Caco-2 (cell line): ENCODE measurements at regions of chr14 and their contacts with region 1.

Region 1: DNA sequence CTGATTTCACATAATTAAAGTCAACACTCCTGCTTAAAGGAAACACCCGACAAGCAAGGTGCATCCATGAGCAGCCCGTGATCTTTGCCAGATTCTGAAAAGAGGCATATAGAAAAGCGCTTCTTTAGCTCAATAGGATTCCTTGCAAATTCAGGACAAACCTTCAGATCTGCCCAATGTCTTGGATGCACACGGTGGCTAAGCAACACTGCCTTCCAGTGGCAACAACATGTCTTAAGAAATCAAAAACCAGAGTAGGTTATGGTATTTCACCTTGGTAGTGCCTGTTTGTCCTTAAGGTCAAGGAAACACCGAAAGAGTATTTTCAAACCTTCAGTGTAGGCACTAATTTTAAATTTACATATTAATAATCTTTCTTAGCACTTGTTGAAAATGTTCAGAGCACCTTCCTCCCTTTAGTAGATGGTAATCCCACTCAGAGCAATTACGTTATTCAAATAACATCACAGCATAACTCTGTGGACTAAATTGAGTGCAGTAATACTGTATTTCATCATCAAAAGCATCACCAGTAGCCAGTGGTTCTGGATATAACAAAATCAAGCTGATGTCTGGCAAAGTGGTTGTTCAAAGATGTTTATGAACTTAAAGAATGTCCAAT is 58.0 kb upstream of the CDKN3 start:
- DNase-seq: peak in 1 of 2 experiments; percentile 35
- H3K4me3 ChIP-seq: no peak overlapping the region
- H3K4me3 Mint-ChIP-seq: no peak overlapping the region
- H3K27ac Mint-ChIP-seq: no peak overlapping the region
- H3K4me1 ChIP-seq: no peaks in the 10 kb centered on the region
- H3K4me1 Mint-ChIP-seq: peaks cover 13% of the 10 kb centered on the region
- H3K27me3 ChIP-seq: no peaks in the 10 kb centered on the region
- H3K27me3 Mint-ChIP-seq: no peaks in the 10 kb centered on the region
- CTCF ChIP-seq: peak; percentile 27 to 70

Region 2: GRCh38 chr14:53613404-53614253 is 725.2 kb before region 1 on chr14:
- CTCF ChIA-PET with region 1: interaction called, 3 read pairs
- POLR2A ChIA-PET with region 1: no interaction called
- intact Hi-C with region 1: loop called (anchors 1 kb)
- DNase-seq: peak; percentile 89 to 91
- H3K4me3 ChIP-seq: peak overlapping the region; percentile 41
- H3K4me3 Mint-ChIP-seq: peak overlapping the region; percentile 83
- H3K27ac Mint-ChIP-seq: peak overlapping the region; percentile 98
- H3K4me1 ChIP-seq: peaks cover 56% of the 10 kb centered on the region
- H3K4me1 Mint-ChIP-seq: peaks cover 17% of the 10 kb centered on the region
- H3K27me3 ChIP-seq: no peaks in the 10 kb centered on the region
- H3K27me3 Mint-ChIP-seq: no peaks in the 10 kb centered on the region
- CTCF ChIP-seq: peak in 1 of 2 experiments; percentile 32

Region 3: GRCh38 chr14:53888535-53889386 is 450.0 kb before region 1 on chr14:
- CTCF ChIA-PET with region 1: no interaction called
- POLR2A ChIA-PET with region 1: no interaction called
- intact Hi-C with region 1: loop called (anchors 5 kb)
- DNase-seq: peak in 1 of 2 experiments; percentile 46
- H3K4me3 ChIP-seq: peak overlapping the region; percentile 13; the same call in 1 of the 2 replicates
- H3K4me3 Mint-ChIP-seq: peak overlapping the region; percentile 59
- H3K27ac Mint-ChIP-seq: peak overlapping the region; percentile 45
- H3K4me1 ChIP-seq: peaks cover 42% of the 10 kb centered on the region
- H3K4me1 Mint-ChIP-seq: peaks cover 48% of the 10 kb centered on the region
- H3K27me3 ChIP-seq: no peaks in the 10 kb centered on the region
- H3K27me3 Mint-ChIP-seq: no peaks in the 10 kb centered on the region
- CTCF ChIP-seq: no peak

Region 4: DNA sequence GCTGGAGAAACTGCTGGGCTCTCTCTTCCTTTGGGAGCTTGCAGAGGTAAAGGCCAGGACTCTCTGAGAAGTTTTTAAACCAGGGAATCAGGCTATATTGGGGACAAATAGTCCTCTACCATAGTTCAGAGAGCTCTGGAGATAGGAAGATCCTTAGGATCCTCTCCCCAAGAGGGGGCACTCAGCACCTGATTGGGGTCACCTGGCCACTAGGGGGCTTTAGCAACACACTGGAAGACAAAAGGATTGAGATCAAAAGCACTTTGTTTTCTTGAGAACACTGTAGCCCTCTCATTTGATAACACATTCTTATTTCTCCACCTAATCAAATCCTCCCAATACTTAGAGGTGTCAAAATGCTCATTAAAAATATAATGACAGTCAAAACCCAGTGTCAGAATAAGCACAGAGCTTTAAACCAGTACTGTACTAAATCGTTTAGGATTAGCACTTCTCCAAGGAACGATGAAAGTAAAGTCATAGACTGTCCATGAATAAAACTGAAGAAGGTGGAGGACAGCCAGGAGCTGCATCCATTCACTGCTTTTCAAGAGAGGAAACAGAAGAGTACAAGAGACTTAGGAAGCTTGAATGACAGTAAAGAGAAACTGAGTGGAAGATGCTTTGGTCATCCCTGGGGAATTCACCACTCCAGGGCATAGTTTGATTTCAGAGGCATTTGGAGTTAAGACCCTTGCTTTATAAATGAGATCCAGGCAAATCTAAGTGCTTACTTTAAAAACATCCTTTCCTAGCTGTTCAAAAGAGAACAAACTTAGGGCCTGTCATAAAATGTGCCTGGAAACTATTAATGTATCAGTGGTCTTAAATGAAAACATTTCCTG is 408.7 kb before region 1 on chr14:
- CTCF ChIA-PET with region 1: interaction called, 3 read pairs
- POLR2A ChIA-PET with region 1: no interaction called
- intact Hi-C with region 1: loop called (anchors 5 kb)
- DNase-seq: peak; percentile 82 to 84
- H3K4me3 ChIP-seq: no peak overlapping the region
- H3K4me3 Mint-ChIP-seq: no peak overlapping the region
- H3K27ac Mint-ChIP-seq: peak overlapping the region; percentile 68
- H3K4me1 ChIP-seq: peaks cover 39% of the 10 kb centered on the region
- H3K4me1 Mint-ChIP-seq: peaks cover 37% of the 10 kb centered on the region
- H3K27me3 ChIP-seq: no peaks in the 10 kb centered on the region
- H3K27me3 Mint-ChIP-seq: no peaks in the 10 kb centered on the region
- CTCF ChIP-seq: peak; percentile 93 to 98

Region 5: DNA sequence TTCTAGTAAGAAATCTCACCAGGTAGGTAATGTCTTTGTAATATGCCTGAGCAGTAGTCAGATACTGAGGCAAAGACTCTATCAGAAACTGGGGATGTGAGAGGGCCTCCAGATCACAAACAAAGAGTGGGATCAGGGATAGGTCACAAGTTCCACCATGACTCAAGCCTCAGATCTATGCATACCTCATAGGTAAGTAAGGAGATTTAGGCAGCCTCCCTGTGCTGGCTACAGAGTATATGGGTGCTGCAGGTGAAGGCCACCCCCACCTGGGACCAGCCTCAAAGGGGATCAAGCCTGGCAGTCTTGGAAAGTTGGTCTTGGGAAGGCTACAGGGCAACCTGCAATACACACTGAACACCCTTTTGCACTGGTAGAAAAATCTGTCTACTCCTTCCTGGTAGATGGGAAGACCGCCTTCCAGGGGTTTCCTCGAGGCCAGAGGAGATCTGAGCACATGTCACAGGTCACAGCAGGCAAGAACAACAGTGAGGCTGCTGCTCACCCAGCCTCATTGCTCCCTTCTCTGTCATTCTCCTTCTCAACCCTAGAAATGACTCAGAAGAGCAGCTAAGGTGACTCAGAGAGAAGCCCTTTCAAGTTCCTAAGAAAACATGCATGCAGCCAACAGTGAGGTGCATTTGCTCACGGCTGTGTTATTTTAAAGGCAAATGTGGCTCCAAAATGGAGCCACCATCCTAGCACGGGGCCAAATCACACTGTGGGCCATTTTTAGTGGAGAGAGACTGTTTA is 85.4 kb before region 1 on chr14:
- CTCF ChIA-PET with region 1: interaction called, 11 read pairs
- POLR2A ChIA-PET with region 1: no interaction called
- intact Hi-C with region 1: no loop called
- DNase-seq: no peak
- H3K4me3 ChIP-seq: no peak overlapping the region
- H3K4me3 Mint-ChIP-seq: no peak overlapping the region
- H3K27ac Mint-ChIP-seq: peak overlapping the region; percentile 93
- H3K4me1 ChIP-seq: peaks cover 36% of the 10 kb centered on the region
- H3K4me1 Mint-ChIP-seq: peaks cover 32% of the 10 kb centered on the region
- H3K27me3 ChIP-seq: no peaks in the 10 kb centered on the region
- H3K27me3 Mint-ChIP-seq: no peaks in the 10 kb centered on the region
- CTCF ChIP-seq: no peak

Region 6: GRCh38 chr14:54399560-54399959 is 60.8 kb after region 1 on chr14:
- CTCF ChIA-PET with region 1: no interaction called
- POLR2A ChIA-PET with region 1: no interaction called
- intact Hi-C with region 1: no loop called
- DNase-seq: no peak
- H3K4me3 ChIP-seq: no peak overlapping the region
- H3K4me3 Mint-ChIP-seq: no peak overlapping the region
- H3K27ac Mint-ChIP-seq: no peak overlapping the region
- H3K4me1 ChIP-seq: peaks cover 9% of the 10 kb centered on the region
- H3K4me1 Mint-ChIP-seq: peaks cover 15% of the 10 kb centered on the region
- H3K27me3 ChIP-seq: no peaks in the 10 kb centered on the region
- H3K27me3 Mint-ChIP-seq: no peaks in the 10 kb centered on the region
- CTCF ChIP-seq: no peak